Cardiac septum (tissue), 1 donor: ENCODE measurements at regions of chr1 and their contacts with region 1.

Region 1: DNA sequence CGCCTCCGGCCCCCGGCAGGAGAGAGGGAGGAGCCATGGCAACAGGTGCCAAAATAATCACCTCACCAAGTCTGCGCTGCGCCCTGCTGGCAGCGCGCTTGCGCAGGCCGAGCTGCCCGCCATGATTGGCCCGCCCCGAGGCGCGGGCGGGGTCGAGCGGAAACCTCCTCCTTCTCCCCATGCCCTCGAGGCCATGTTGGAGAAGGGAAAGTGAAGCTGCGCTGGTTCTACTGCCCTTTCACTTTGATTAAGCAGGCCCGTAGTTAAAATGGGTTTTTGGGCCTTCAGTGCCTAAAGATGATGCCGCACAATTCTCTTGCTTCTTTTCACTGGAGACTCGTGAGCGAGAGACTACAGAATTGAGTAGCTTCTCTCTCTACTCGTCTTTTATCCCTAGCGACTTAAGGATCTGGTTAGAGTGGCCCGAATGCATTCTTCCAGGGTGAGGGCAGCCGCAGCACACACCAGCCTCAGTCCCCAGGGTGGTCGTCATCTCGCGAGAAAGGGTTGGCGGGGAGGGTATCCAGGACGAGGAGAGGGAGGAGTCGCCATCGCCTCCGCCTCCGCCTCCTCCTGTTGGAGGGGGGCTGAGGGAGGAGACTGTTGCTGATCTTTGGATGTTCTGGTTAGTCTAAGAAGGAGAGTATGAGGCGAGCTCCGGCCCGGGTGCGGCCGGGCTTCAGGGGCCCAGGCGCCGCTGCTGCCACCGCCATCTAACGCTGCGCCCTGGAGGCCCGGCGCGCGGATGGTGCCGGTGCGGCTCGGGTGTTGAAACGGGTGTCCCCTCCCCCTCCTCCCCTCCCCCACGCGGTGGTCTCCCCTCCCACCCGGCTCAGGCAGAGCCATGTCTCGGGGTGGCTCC is at the start of gene DCAF6:
- DNase-seq: peak; percentile 99
- total RNA-seq, gene DCAF6: 167 TPM

Region 2: GRCh38 chr1:167220537-167221125 is 715.7 kb before region 1 on chr1 and contains the start of gene POU2F1:
- intact Hi-C with region 1: loop called (anchors 5 kb)
- DNase-seq: peak; percentile 100
- total RNA-seq, gene POU2F1: 9.9 TPM

Region 3: GRCh38 chr1:167721617-167722151 is 214.6 kb before region 1 on chr1 and contains the start of gene MPZL1:
- intact Hi-C with region 1: loop called (anchors 2 kb)
- DNase-seq: peak; percentile 99
- total RNA-seq, gene MPZL1: 35.7 TPM

Region 4: GRCh38 chr1:167819849-167820683 is 116.2 kb before region 1 on chr1:
- intact Hi-C with region 1: loop called (anchors 5 kb)
- DNase-seq: peak; percentile 93

Region 5: DNA sequence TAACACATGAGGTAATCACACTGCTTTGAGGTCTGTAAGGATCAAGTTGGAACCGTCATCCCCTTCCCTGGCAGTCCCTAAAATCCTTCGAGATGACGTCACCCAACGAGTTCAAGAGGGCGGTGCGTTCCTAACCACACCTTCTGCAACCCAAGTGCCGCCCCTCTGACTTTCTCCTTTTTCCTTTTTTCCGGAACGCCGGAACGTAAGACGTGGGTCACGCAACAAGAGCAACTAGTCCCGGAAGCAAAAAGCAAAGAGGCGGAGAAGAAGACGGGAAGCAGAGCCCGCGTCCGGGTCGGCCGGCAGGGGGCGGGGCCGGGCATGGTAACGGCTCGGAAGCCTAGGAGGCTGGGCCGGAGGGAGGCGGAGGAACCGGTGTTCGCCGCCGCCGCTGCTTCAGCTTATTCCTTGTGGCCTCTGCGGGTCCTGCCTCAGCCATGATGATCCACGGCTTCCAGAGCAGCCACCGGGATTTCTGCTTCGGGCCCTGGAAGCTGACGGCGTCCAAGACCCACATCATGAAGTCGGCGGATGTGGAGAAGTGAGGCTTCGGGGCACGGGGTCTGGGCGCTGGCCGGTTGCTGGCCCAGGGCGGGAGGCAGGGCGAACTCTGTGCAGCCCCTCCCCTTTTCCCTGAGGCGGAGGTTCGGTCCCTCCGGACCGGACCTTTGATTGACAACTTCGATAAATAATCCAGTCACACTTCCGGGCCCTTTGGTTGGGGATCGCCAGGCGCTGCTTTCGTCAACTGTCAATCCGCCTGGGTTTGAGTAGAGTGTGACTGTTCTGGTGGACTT is 242.5 kb after region 1 on chr1 and contains the start of gene TIPRL:
- intact Hi-C with region 1: loop called (anchors 5 kb)
- DNase-seq: peak; percentile 98
- total RNA-seq, gene TIPRL: 30.4 TPM